Motor neuron (in vitro differentiated cells): ENCODE measurements at regions of chr10 and their contacts with region 1.

Region 1: DNA sequence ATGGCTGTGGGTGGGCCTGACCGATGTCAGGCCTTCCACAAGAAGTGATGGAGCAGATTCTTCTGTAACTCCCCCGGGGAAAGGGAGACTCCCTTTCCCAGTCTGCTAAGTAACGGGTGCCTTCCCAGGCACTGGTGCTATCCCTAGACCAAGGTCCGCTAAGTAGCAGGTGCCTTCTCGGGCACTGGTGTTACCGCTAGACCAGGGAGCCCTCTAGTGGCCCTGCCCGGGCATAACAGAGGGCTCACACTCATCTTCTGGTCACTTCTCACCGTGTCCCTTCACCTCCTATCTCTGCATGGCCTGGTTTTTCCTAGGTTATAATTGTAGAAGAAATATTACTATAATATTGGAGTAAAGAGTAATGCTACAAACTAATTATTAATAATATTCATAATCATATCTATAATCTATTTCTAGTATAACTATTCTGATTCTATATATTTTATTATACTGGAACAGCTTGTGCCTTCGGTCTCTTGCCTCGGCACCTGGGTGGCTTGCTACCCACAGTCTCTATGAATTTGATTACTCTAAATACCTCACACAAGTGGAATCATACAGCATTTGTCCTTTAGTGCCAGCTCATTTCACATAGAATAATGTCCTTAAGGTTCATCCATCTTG is 1378.7 kb downstream of the XPNPEP1 start:
- ATAC-seq: peak in 6 of 8 experiments; percentile 56 to 85 (median 78)
- H3K4me3 ChIP-seq: no peak overlapping the region
- H3K27ac ChIP-seq: no peak overlapping the region
- H3K4me1 ChIP-seq: no peaks in the 10 kb centered on the region

Region 2: GRCh38 chr10:108112219-108112618 is 432.4 kb before region 1 on chr10:
- in situ Hi-C with region 1: loop called in 1 of 9 experiments (anchors 25 kb)
- ATAC-seq: peak in 1 of 8 experiments; percentile 19
- H3K4me3 ChIP-seq: no peak overlapping the region
- H3K27ac ChIP-seq: no peak overlapping the region
- H3K4me1 ChIP-seq: no peaks in the 10 kb centered on the region

Region 3: DNA sequence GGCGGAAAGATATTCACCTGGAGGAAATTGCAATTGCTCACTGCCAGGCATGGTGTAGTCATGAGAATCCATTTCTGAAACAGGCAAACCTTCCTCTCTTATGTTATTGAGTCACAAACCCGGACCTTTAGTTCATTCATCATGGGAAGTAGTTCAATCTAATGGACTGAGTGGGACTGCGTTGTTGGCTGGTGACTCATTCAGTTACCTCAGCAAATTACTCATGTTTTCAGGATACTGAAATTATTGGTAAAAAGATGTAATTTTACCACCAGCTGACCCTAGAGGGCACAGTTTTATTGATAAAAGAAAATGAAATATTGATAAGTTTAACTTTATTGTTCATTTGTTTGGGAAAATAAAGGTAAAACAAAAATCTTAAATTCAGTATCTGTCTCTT is 185.7 kb before region 1 on chr10:
- in situ Hi-C with region 1: loop called in 1 of 9 experiments (anchors 25 kb)
- ATAC-seq: peak in 7 of 8 experiments; percentile 43 to 100 (median 100)
- H3K4me3 ChIP-seq: no peak overlapping the region
- H3K27ac ChIP-seq: no peak overlapping the region
- H3K4me1 ChIP-seq: peaks cover 0 to 7% of the 10 kb centered on the region in 2 donors